Aorta (tissue), 5 donors: ENCODE measurements at regions of chr11 and their contacts with region 1.

Region 1: GRCh38 chr11:38438091-38438490 is 1840.1 kb upstream of the RAG2 start:
- DNase-seq: no peak
- ATAC-seq: no peak
- H3K4me3 ChIP-seq: no peak overlapping the region
- H3K27ac ChIP-seq: no peak overlapping the region
- H3K4me1 ChIP-seq: no peaks in the 10 kb centered on the region
- H3K27me3 ChIP-seq: no peaks in the 10 kb centered on the region

Region 2: GRCh38 chr11:38498721-38499120 is 60.6 kb after region 1 on chr11:
- intact Hi-C with region 1: loop called in 1 of 2 experiments (anchors 10 kb)
- DNase-seq: no peak
- ATAC-seq: no peak
- H3K4me3 ChIP-seq: no peak overlapping the region
- H3K27ac ChIP-seq: no peak overlapping the region
- H3K4me1 ChIP-seq: no peaks in the 10 kb centered on the region
- H3K27me3 ChIP-seq: no peaks in the 10 kb centered on the region